Esophagus squamous epithelium (tissue), 5 donors: ENCODE measurements at regions of chr5 and their contacts with region 1.

Region 1: DNA sequence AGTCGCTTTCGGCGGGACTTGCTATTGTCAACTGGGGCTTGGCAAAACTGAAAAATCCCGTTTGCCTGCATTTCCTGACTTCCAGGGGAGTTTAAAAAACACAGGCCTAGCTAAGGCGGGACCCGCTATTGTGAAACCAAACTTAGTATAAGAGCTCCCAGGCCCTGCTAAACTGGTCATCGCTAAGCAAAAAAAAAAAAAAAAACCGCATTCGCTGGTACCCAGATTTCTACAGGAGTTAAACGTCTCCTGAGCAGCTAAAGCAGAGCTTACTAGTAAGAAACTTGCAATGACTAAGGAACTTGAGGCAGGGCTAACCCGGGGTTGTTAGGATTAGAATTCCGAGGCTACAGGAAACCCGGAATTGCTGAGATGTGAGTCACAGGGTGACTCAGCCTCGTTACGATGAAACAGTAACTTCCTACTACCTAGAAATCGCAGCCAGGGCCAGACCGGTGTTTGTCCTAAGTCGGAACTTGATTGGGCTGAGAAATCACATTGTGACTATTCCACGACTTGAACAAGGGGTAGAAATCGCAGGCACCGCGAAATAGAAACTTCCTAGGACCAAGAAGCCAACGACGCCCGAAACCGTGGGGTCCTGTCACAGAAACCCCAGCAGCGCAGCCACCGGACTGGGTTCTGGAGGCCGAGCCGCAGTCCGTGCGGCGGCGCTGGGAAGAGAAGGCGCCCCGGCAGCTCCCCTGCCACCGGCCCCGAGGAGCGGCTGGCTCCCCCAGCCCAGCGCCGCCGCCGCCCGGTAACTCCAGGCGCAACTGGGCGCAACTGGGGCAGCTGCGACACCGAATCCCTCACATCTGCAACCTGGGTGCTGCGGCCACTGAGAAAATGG is 89.5 kb downstream of the ANXA2R start:
- DNase-seq: peak; percentile 45
- H3K4me3 ChIP-seq: peak overlapping the region; percentile 43 to 70 (median 61)
- H3K27ac ChIP-seq: peak overlapping the region; percentile 91 to 96 (median 92)
- H3K4me1 ChIP-seq: peaks cover 7 to 51% (median 16%) of the 10 kb centered on the region in 3 donors
- H3K27me3 ChIP-seq: peaks cover 3 to 100% (median 6%) of the 10 kb centered on the region in 4 donors
- CTCF ChIP-seq: peak in 1 of 6 experiments; percentile 13
- POLR2A ChIP-seq: peak in 2 of 4 donors; percentile 41 to 69

Region 2: GRCh38 chr5:42994246-42995151 is 43.8 kb after region 1 on chr5:
- intact Hi-C with region 1: loop called (anchors 5 kb)
- DNase-seq: peak; percentile 49
- H3K4me3 ChIP-seq: peak overlapping the region; percentile 16 to 73 (median 60)
- H3K27ac ChIP-seq: peak overlapping the region; percentile 68 to 97 (median 90)
- H3K4me1 ChIP-seq: peaks cover 0 to 53% (median 4%) of the 10 kb centered on the region in 3 donors
- H3K27me3 ChIP-seq: peaks cover 0 to 100% (median 24%) of the 10 kb centered on the region in 4 donors
- CTCF ChIP-seq: peak; percentile 82 to 93 (median 86)
- POLR2A ChIP-seq: peak in 1 of 4 donors; percentile 18